A673 (cell line): ENCODE measurements at regions of chr2 and their contacts with region 1.

Region 1: DNA sequence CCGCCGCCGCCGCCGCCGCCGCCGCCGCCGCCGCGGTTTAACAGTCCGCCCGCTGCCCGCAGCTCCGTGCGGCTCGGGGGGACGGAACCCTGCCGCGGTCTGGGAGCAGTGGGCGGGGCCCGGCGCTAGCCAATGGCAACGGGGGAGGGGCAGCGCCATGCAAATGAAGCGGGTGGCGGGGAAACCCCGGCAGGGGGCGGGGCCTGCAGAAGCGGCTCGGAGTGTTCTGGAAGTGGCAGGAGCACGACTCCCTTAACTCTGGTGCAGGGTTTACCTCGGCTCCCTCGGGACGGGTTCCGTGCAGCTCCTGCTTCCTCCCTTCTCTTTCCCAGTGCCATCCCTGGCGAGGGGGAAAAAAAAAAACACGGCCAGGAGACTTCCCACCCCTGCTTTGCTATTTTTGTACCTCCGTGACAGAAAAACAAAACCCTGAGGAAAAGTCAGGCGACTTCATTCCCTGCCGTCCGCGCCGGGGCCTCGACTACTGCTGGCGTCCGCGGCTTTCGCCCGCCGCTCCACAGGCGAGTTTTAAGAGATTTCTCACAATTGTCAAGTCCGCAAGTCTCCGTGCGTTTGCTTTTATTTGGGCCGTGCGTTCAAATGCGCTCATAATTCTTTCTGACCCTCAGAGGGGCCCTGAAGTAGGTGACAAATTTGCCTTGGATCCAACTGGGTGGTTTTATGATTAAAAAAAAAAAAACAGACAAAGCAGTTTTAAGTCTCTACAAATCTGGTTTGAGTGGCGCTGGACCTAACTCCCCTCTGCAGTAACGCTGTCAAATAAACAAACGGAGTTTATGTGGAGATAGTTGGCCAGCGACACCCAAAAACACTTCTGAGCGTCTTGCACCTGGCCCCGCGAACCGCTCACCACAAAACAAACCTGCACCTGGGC is at the start of gene KANSL1L:
- DNase-seq: peak; percentile 98
- H3K4me3 ChIP-seq: peak within 1 kb of the TSS; percentile 83
- H3K27ac ChIP-seq: peak within 1 kb of the TSS; percentile 95
- H3K4me1 ChIP-seq: peaks cover 20% of the 10 kb centered on the region
- H3K27me3 ChIP-seq: no peaks in the 10 kb centered on the region
- CTCF ChIP-seq: no peak
- total RNA-seq, gene KANSL1L: 17.7 and 19.6 TPM in 2 replicates

Region 2: GRCh38 chr2:208254871-208255556 is 1916.5 kb before region 1 on chr2 and contains the start of gene IDH1:
- CTCF ChIA-PET with region 1: interaction called, 10 read pairs
- POLR2A ChIA-PET with region 1: no interaction called
- intact Hi-C with region 1: no loop called
- DNase-seq: peak; percentile 95
- H3K4me3 ChIP-seq: peak within 1 kb of the TSS; percentile 100
- H3K27ac ChIP-seq: peak within 1 kb of the TSS; percentile 84
- H3K4me1 ChIP-seq: peaks cover 10% of the 10 kb centered on the region
- H3K27me3 ChIP-seq: no peaks in the 10 kb centered on the region
- CTCF ChIP-seq: peak; percentile 71
- total RNA-seq, gene IDH1: 191 and 196 TPM in 2 replicates